ENCODE measurements at regions of chr3 and their contacts with region 1.

Region 1: DNA sequence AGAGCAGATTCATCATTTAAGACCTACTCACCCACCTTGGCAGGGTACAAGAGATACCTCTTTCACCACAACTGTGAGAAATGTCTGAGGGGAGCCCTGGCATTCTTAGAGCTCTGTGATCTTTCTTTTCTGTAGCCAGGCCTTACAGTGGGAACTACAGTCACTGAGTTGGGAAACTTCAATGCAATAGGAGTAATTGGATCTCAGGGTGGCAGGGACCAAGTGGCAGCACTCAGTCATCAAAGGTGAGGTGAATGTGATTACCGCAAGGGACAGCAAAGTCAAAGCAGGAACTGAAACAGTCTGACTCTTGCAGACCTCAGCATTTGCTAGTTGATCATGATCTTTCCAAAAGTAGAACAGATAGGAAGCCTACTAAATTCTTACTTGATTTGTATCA is 7.2 kb upstream of the MCF2L2 start:
- DNase-seq: no peak
- H3K4me3 Mint-ChIP-seq: no peak overlapping the region
- H3K27ac Mint-ChIP-seq: peak overlapping the region; percentile 15
- H3K4me1 Mint-ChIP-seq: peaks cover 68% of the 10 kb centered on the region
- H3K27me3 Mint-ChIP-seq: peaks cover 4% of the 10 kb centered on the region

Region 2: DNA sequence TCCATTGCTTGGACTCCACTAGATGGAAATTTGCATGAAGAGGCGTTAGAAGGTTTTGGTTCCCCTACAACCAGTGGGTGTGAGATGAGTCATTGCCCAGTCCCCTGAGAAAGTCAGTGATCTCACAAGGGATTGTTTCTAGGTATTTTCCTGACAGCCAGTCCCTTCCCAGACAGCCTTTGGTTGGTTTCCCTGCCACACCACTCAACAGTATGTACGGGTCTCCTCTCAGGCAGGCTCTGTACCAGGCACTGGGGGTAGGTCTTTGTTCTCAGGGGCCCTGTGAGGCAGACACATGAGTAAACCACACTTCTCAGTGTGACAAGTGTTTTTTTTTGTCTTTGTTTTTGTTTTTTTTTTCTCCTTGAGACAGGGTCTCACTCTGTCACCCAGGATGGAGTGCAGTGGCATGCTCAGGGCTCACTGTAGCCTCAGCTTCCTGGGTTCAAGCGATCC is 277.1 kb before region 1 on chr3:
- intact Hi-C with region 1: loop called (anchors 2 kb)
- DNase-seq: no peak
- H3K4me3 Mint-ChIP-seq: no peak overlapping the region
- H3K27ac Mint-ChIP-seq: peak overlapping the region; percentile 76
- H3K4me1 Mint-ChIP-seq: peaks cover 32% of the 10 kb centered on the region
- H3K27me3 Mint-ChIP-seq: no peaks in the 10 kb centered on the region

Region 3: GRCh38 chr3:183357564-183358079 is 78.0 kb before region 1 on chr3:
- intact Hi-C with region 1: no loop called
- DNase-seq: no peak
- H3K4me3 Mint-ChIP-seq: no peak overlapping the region
- H3K27ac Mint-ChIP-seq: no peak overlapping the region
- H3K4me1 Mint-ChIP-seq: peaks cover 14% of the 10 kb centered on the region
- H3K27me3 Mint-ChIP-seq: no peaks in the 10 kb centered on the region

Region 4: GRCh38 chr3:183447206-183448001 is 11.7 kb after region 1 on chr3:
- intact Hi-C with region 1: loop called (anchors 1 kb)
- DNase-seq: peak; percentile 78
- H3K4me3 Mint-ChIP-seq: peak overlapping the region; percentile 92
- H3K27ac Mint-ChIP-seq: peak overlapping the region; percentile 83
- H3K4me1 Mint-ChIP-seq: peaks cover 17% of the 10 kb centered on the region
- H3K27me3 Mint-ChIP-seq: peaks cover 9% of the 10 kb centered on the region

Region 5: GRCh38 chr3:183515968-183516851 is 80.5 kb after region 1 on chr3:
- intact Hi-C with region 1: loop called (anchors 5 kb)
- DNase-seq: peak; percentile 59
- H3K4me3 Mint-ChIP-seq: no peak overlapping the region
- H3K27ac Mint-ChIP-seq: peak overlapping the region; percentile 90
- H3K4me1 Mint-ChIP-seq: peaks cover 66% of the 10 kb centered on the region
- H3K27me3 Mint-ChIP-seq: no peaks in the 10 kb centered on the region

Measured in activated T-helper 2 cell treated with anti-CD3 and anti-CD28 coated beads, Interferon-gamma antibody, Interleukin-2, Interleukin-4, amounts not matched to agents 10 μg/mL and 5 μg/mL and 100 μg/mL, durations not matched to agents 14 hours and 24 hours and 36 hours (primary cell).